PC-9 (cell line): ENCODE measurements at regions of chr6 and their contacts with region 1.

Region 1: GRCh38 chr6:81894788-81895271 is 142.3 kb upstream of the TENT5A start:
- DNase-seq: no peak
- H3K4me3 ChIP-seq: no peak overlapping the region
- H3K27ac ChIP-seq: peak overlapping the region; percentile 53
- H3K4me1 ChIP-seq: peaks cover 30% of the 10 kb centered on the region
- H3K27me3 ChIP-seq: no peaks in the 10 kb centered on the region
- CTCF ChIP-seq: no peak

Region 2: DNA sequence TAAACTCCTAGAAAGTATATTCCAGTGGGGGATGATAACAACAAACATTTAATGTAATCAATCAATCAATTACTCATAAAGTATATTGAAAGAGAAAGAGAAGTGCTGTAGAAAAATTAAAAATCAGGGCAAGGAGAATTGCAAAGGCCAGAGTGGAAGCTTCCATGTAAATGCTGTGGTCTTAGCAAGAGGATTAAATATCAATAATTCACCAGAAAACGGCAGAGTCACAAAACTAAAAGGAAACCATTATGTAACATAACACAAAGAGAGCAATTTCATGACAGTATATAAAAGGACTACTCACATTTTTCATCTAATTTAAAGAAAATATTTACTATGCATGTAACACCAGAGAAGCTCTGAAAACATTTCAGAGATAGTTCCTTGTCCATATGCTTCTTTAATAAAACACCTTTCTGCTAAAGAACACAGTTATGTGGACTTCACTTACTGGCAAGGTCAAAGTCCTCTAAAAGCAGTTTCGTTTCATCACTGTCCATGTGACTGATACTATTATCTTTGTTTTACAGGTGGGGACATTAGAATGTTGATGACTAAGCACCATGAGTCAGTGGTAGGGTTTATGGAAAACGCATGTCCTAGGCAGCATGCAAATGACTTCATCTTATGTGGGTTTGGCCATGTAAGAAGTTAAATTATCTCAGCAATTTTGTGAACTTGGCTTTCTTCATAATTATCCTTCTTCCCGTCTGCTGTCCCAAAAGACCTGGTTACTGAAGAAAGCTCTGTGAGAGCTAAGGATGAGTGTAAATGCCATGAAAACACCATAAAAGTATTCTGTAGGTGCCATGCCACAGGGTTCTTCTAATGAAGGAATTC is 43.4 kb after region 1 on chr6:
- CTCF ChIA-PET with region 1: interaction called, 3 read pairs
- POLR2A ChIA-PET with region 1: interaction called, 3 read pairs
- intact Hi-C with region 1: loop called (anchors 2 kb)
- DNase-seq: peak; percentile 15 to 91
- H3K4me3 ChIP-seq: no peak overlapping the region
- H3K27ac ChIP-seq: peak overlapping the region; percentile 96
- H3K4me1 ChIP-seq: peaks cover 46% of the 10 kb centered on the region
- H3K27me3 ChIP-seq: no peaks in the 10 kb centered on the region
- CTCF ChIP-seq: no peak

Region 3: DNA sequence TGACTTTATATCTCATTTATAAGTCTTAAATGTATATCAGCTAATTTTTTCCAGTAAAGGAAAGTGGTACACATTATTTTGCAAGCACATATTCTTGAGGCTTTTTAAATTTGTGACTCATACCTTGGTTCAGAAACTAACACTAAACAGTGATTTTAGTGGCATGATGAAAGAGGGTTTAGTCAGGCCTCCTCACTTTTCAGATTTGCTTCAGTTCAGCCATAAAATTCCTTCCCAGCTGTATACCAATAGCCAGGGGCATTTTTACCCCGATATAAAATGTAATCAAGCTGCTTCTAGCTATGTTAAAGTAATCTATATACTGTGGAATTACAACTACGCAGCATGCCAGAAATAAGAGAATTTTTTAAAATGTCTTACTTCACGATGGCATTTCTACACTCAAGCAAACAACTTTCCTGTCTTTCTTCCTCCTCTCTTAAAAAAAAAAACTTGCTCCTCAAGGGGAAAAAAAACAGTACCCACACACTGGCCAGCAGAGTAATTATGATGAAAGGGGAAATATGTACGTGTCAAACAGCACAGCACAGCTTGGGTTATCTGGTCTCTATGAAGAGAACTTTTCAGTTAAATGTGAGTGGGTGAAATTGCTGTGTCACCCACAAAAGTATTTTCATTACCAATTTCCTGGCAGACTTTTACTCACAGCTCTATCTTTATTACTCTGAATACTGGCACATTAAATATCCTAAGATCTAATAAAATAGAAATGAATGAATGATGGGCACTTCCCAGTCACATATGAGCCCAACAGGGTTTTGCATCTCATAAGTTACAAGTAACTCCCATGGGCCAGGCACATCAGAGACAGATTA is 102.5 kb after region 1 on chr6:
- CTCF ChIA-PET with region 1: no interaction called
- POLR2A ChIA-PET with region 1: no interaction called
- intact Hi-C with region 1: loop called (anchors 5 kb)
- DNase-seq: peak in 1 of 2 experiments; percentile 71
- H3K4me3 ChIP-seq: no peak overlapping the region
- H3K27ac ChIP-seq: peak overlapping the region; percentile 89
- H3K4me1 ChIP-seq: peaks cover 37% of the 10 kb centered on the region
- H3K27me3 ChIP-seq: no peaks in the 10 kb centered on the region
- CTCF ChIP-seq: no peak

Region 4: GRCh38 chr6:82521369-82521768 is 626.5 kb after region 1 on chr6:
- CTCF ChIA-PET with region 1: no interaction called
- POLR2A ChIA-PET with region 1: no interaction called
- intact Hi-C with region 1: no loop called
- DNase-seq: no peak
- H3K4me3 ChIP-seq: no peak overlapping the region
- H3K27ac ChIP-seq: no peak overlapping the region
- H3K4me1 ChIP-seq: no peaks in the 10 kb centered on the region
- H3K27me3 ChIP-seq: no peaks in the 10 kb centered on the region
- CTCF ChIP-seq: no peak